B cell (primary cell): ENCODE measurements at regions of chr5 and their contacts with region 1.

Region 1: DNA sequence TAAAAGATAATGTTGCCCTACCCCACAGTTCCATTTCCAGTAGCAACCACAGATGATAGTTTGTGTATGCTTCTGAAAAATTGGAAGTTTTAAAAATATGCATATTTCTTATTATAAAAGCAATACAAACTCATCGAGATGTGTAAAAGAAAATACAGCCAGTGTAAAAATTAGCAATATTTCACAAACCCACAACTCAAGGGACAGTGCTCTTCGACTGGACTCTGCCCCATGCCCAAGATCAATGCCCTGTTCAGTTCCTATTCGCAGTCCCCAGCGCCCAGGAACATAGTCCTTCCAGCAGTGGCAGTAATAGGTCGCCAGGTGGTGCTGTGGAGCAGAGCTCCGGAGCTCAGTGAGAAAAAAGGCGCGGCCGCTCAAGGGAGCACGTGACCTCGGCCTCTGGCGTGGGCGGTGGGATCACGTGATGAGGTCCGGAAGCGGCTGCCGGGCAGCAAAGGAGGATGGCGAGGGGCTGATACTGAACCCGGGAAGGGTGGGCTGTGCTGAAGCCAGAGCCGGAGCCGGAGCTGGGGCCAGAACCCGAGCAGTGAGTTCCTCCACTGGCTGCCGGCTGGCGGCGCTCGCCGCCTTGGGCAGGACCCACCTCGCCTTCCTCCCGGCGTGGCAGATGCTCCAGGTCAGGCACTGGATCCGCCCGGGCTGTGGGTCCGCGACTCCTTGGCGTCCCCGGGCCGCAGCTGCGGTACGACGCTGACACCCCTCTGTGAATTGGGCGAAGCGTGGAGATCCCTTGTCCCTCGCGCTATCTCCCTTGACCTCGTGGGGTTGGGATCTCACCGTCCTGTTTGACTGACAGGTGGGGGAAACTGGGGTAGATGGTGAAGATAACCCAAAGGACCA is at the start of gene SLC36A1:
- DNase-seq: peak; percentile 95
- ATAC-seq: peak; percentile 98
- H3K4me3 ChIP-seq: peak within 1 kb of the TSS; percentile 77 to 94 (median 84)
- H3K4me3 Mint-ChIP-seq: peak within 1 kb of the TSS; percentile 93
- H3K27ac ChIP-seq: peak within 1 kb of the TSS; percentile 66 to 80
- H3K27ac Mint-ChIP-seq: peak within 1 kb of the TSS; percentile 97
- H3K4me1 ChIP-seq: peaks cover 11 to 12% of the 10 kb centered on the region in 2 donors
- H3K4me1 Mint-ChIP-seq: peaks cover 25% of the 10 kb centered on the region
- H3K27me3 ChIP-seq: peaks cover 0 to 7% (median 2%) of the 10 kb centered on the region in 4 experiments
- H3K27me3 Mint-ChIP-seq: peaks cover 20% of the 10 kb centered on the region
- CTCF ChIP-seq: peak; percentile 95
- total RNA-seq, gene SLC36A1: 12.9 and 15.1 TPM in 2 replicates

Region 2: DNA sequence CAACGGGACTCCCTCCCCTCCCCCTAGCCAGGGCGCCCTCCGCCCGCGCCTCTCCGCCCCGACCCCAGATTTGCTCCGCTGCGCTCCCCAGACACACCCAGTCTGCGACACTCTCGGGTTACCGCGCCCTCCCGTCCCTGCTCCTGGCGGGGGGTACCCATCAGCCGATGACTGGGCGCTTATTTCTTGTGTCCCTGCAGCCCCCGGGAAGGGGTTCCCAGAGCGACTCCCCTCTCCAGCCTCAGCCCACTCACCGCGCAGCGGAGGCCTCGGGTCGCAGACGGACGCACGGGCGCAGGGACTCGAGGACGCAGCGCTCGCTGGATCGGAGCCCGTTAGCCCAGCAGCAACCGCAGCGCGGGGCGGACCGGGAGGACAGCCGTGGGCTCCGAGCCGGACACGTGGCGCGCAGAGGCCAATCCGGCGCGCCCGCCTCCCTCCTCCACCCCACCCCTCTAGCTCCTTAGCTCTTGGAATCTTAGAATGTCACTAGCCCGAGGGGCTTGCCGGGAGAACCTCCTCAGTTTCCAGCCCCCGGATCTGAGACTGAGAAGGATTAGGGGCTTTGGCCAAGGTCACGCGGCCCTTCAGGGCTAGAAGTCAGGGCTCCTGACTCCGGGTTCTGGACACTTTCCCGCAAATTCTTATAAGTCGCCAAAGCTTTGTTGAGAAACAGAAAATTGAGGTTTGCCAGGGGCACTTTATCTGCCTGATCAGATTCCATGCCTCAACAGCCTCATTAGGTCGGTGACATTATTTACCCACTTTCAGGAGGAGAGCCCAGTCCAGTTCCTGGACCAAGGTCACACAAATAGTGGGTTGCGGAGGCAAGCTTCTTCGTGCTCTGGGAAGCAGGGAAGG is 289.8 kb before region 1 on chr5 and contains the start of gene ANXA6:
- CTCF ChIA-PET with region 1: no interaction called
- POLR2A ChIA-PET with region 1: no interaction called
- intact Hi-C with region 1: loop called (anchors 5 kb)
- DNase-seq: peak; percentile 72
- ATAC-seq: peak; percentile 77
- H3K4me3 ChIP-seq: peak within 1 kb of the TSS; percentile 87 to 93 (median 89)
- H3K4me3 Mint-ChIP-seq: peak within 1 kb of the TSS; percentile 97
- H3K27ac ChIP-seq: peak within 1 kb of the TSS; percentile 76 to 91
- H3K27ac Mint-ChIP-seq: peak within 1 kb of the TSS; percentile 97
- H3K4me1 ChIP-seq: peaks cover 63 to 74% of the 10 kb centered on the region in 2 donors
- H3K4me1 Mint-ChIP-seq: peaks cover 73% of the 10 kb centered on the region
- H3K27me3 ChIP-seq: no peaks in the 10 kb centered on the region
- H3K27me3 Mint-ChIP-seq: no peaks in the 10 kb centered on the region
- CTCF ChIP-seq: no peak
- total RNA-seq, gene ANXA6: 300 and 316 TPM in 2 replicates

Region 3: GRCh38 chr5:151417712-151418111 is 29.7 kb before region 1 on chr5:
- CTCF ChIA-PET with region 1: no interaction called
- POLR2A ChIA-PET with region 1: no interaction called
- intact Hi-C with region 1: no loop called
- DNase-seq: no peak
- ATAC-seq: no peak
- H3K4me3 ChIP-seq: no peak overlapping the region
- H3K4me3 Mint-ChIP-seq: no peak overlapping the region
- H3K27ac ChIP-seq: no peak overlapping the region
- H3K27ac Mint-ChIP-seq: no peak overlapping the region
- H3K4me1 ChIP-seq: no peaks in the 10 kb centered on the region
- H3K4me1 Mint-ChIP-seq: no peaks in the 10 kb centered on the region
- H3K27me3 ChIP-seq: peaks cover 0 to 15% (median 2%) of the 10 kb centered on the region in 4 experiments
- H3K27me3 Mint-ChIP-seq: peaks cover 27% of the 10 kb centered on the region
- CTCF ChIP-seq: no peak

Region 4: GRCh38 chr5:151463137-151464029 is 16.0 kb after region 1 on chr5:
- CTCF ChIA-PET with region 1: interaction called, 19 read pairs
- POLR2A ChIA-PET with region 1: no interaction called
- intact Hi-C with region 1: no loop called
- DNase-seq: no peak
- ATAC-seq: no peak
- H3K4me3 ChIP-seq: no peak overlapping the region
- H3K4me3 Mint-ChIP-seq: no peak overlapping the region
- H3K27ac ChIP-seq: no peak overlapping the region
- H3K27ac Mint-ChIP-seq: no peak overlapping the region
- H3K4me1 ChIP-seq: no peaks in the 10 kb centered on the region
- H3K4me1 Mint-ChIP-seq: no peaks in the 10 kb centered on the region
- H3K27me3 ChIP-seq: no peaks in the 10 kb centered on the region
- H3K27me3 Mint-ChIP-seq: no peaks in the 10 kb centered on the region
- CTCF ChIP-seq: no peak

Region 5: GRCh38 chr5:151523335-151523734 is 75.9 kb after region 1 on chr5:
- CTCF ChIA-PET with region 1: interaction called, 10 read pairs
- POLR2A ChIA-PET with region 1: no interaction called
- intact Hi-C with region 1: loop called (anchors 1 kb)
- DNase-seq: peak; percentile 60
- ATAC-seq: peak; percentile 61
- H3K4me3 ChIP-seq: no peak overlapping the region
- H3K4me3 Mint-ChIP-seq: no peak overlapping the region
- H3K27ac ChIP-seq: no peak overlapping the region
- H3K27ac Mint-ChIP-seq: no peak overlapping the region
- H3K4me1 ChIP-seq: no peaks in the 10 kb centered on the region
- H3K4me1 Mint-ChIP-seq: no peaks in the 10 kb centered on the region
- H3K27me3 ChIP-seq: peaks cover 0 to 6% (median 0%) of the 10 kb centered on the region in 4 experiments
- H3K27me3 Mint-ChIP-seq: peaks cover 3% of the 10 kb centered on the region
- CTCF ChIP-seq: peak; percentile 60

Region 6: GRCh38 chr5:151659001-151659754 is 211.8 kb after region 1 on chr5:
- CTCF ChIA-PET with region 1: interaction called, 10 read pairs
- POLR2A ChIA-PET with region 1: no interaction called
- intact Hi-C with region 1: no loop called
- DNase-seq: peak; percentile 86
- ATAC-seq: peak; percentile 90
- H3K4me3 ChIP-seq: no peak overlapping the region
- H3K4me3 Mint-ChIP-seq: no peak overlapping the region
- H3K27ac ChIP-seq: no peak overlapping the region
- H3K27ac Mint-ChIP-seq: no peak overlapping the region
- H3K4me1 ChIP-seq: peaks cover 15 to 22% of the 10 kb centered on the region in 2 donors
- H3K4me1 Mint-ChIP-seq: peaks cover 25% of the 10 kb centered on the region
- H3K27me3 ChIP-seq: peaks cover 0 to 4% (median 0%) of the 10 kb centered on the region in 4 experiments
- H3K27me3 Mint-ChIP-seq: peaks cover 4% of the 10 kb centered on the region
- CTCF ChIP-seq: peak; percentile 89

Region 7: GRCh38 chr5:151758430-151759241 is 311.2 kb after region 1 on chr5 and contains the start of gene ATOX1:
- CTCF ChIA-PET with region 1: interaction called, 3 read pairs
- POLR2A ChIA-PET with region 1: no interaction called
- intact Hi-C with region 1: loop called (anchors 5 kb)
- DNase-seq: peak; percentile 92
- ATAC-seq: peak; percentile 100
- H3K4me3 ChIP-seq: peak within 1 kb of the TSS; percentile 62 to 94 (median 81)
- H3K4me3 Mint-ChIP-seq: peak within 1 kb of the TSS; percentile 82
- H3K27ac ChIP-seq: peak within 1 kb of the TSS; percentile 52 to 75
- H3K27ac Mint-ChIP-seq: peak within 1 kb of the TSS; percentile 74
- H3K4me1 ChIP-seq: peaks cover 22 to 29% of the 10 kb centered on the region in 2 donors
- H3K4me1 Mint-ChIP-seq: peaks cover 36% of the 10 kb centered on the region
- H3K27me3 ChIP-seq: no peaks in the 10 kb centered on the region
- H3K27me3 Mint-ChIP-seq: no peaks in the 10 kb centered on the region
- CTCF ChIP-seq: no peak
- total RNA-seq, gene ATOX1: 32.0 and 37.3 TPM in 2 replicates